ENCODE measurements at regions of chr1 and their contacts with region 1.

Region 1: DNA sequence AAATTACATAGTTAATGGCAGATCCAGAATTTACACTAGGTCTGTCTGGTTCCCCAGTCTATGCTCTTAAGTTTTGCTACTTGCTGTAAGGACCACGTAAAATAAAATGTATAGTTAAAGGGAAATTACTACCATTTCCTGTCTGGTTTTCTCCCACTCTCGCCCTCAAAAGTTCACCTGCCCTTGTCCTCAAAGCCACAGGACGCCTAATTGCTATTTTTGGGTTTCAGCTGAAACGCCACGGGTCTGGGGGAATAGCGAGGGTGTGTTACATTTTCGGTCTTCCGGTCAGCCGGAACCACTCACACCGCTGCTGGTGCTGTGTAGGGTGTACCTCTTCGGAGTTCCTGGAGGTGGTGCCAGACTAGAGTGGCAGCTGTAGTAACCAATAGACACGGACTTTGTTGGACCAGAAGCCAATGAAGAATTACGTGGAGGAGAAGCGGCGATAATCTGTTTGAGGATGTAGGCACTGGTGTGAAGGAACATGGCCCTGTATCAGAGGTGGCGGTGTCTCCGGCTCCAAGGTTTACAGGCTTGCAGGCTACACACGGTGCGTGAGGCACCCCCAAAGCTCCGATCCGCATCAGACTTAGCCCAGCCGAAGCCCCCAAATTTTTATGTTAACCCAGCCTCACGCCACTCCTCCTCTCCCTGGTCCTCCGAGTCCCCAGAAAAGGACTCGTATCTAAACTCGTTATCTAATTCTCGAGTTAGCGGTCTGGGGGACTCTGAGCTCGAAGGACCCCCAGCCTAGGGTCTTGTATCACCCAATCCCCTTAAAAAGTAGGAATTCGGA is at the start of gene TARS2:
- DNase-seq: peak; percentile 71 to 97 (median 95)
- ATAC-seq: peak; percentile 100
- H3K4me3 ChIP-seq: peak within 1 kb of the TSS; percentile 95
- H3K4me3 Mint-ChIP-seq: peak within 1 kb of the TSS; percentile 91 to 100 (median 96)
- H3K27ac ChIP-seq: peak within 1 kb of the TSS; percentile 83
- H3K27ac Mint-ChIP-seq: peak within 1 kb of the TSS; percentile 92 to 100 (median 99)
- H3K4me1 ChIP-seq: peaks cover 4 to 8% of the 10 kb centered on the region in 2 donors
- H3K4me1 Mint-ChIP-seq: peaks cover 5 to 28% (median 20%) of the 10 kb centered on the region in 7 donors
- H3K27me3 ChIP-seq: no peaks in the 10 kb centered on the region
- H3K27me3 Mint-ChIP-seq: no peaks in the 10 kb centered on the region
- total RNA-seq, gene TARS2: 30.3 to 39.0 (median 36.4) TPM

Region 2: DNA sequence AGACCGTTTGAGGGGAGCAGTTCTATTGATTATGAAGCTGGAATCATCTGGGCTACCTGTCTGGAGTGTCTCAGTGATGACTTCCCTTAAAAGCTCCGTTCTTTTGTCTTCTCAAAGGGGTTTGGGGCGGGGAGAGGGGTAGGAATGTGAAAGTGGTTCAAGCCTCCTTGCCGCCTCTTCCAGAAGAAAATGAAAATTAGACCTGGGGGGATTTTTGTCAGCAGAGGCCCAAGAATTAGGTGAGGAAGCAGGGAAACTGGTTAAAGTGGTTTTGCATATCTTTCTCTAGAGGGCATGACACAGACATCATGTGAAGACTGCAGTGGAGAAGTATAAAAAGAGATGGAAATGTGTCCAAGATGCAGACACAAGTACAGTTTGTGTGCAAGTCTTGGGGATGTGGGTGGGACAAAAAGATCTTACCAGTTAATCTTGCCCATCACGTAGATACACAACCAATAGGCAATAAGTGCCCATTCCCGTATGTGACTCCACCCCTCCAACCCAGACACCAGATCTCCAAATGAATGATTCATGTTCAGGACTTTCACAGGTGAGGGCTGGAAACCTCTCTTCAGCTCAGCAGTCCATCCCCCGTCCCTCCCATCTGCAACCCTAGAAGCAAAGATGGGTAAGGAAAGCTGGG is 550.0 kb before region 1 on chr1:
- CTCF ChIA-PET with region 1: no interaction called
- POLR2A ChIA-PET with region 1: no interaction called
- intact Hi-C with region 1: no loop called
- DNase-seq: no peak
- ATAC-seq: no peak
- H3K4me3 ChIP-seq: no peak overlapping the region
- H3K4me3 Mint-ChIP-seq: peak overlapping the region in 1 of 10 donors; percentile 56
- H3K27ac ChIP-seq: no peak overlapping the region
- H3K27ac Mint-ChIP-seq: peak overlapping the region in 3 of 9 donors; percentile 23 to 75 (median 23)
- H3K4me1 ChIP-seq: no peaks in the 10 kb centered on the region
- H3K4me1 Mint-ChIP-seq: peaks cover 0 to 26% (median 7%) of the 10 kb centered on the region in 7 donors
- H3K27me3 ChIP-seq: no peaks in the 10 kb centered on the region
- H3K27me3 Mint-ChIP-seq: peaks cover 0 to 1% (median 0%) of the 10 kb centered on the region in 5 donors

Region 3: DNA sequence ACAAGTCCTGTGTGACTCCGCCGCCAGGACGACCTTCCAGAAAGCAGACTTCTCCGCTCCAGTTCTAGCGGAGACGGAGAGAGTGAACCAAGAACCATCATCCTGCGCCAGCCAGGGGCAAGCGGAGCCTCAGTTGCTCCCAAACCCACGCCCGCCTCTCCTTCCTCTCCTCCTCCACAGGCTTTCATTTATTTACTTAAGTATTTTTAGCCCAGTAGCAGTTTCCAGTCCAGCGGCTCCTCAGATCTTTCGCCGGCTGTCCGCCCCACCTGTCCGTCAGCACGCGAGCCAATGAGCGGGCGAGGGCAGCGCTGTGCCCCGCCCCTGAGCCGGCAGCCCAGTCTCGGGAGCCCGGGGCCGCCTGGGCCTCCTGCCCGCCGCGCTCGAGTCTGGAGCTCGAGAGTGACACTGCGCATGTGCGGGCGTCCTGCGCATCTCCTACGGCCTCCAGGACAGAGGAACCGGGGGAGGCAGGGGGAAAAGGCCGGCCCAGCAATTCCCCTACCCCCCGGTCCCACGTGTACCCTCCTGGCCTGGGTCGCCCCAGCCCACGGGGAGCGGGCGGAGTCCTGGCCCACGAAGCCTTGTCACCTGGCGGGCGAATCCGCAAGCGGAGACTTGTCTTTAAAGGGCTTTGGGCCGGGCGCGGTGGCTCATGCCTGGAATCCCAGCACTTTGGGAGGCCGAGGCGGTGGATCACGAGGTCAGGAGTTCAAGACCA is 28.3 kb after region 1 on chr1 and contains the start of gene FALEC:
- CTCF ChIA-PET with region 1: interaction called, 3 read pairs
- POLR2A ChIA-PET with region 1: interaction called, 16 read pairs
- intact Hi-C with region 1: loop called (anchors 1 kb)
- DNase-seq: peak; percentile 81 to 94 (median 86)
- ATAC-seq: peak; percentile 99
- H3K4me3 ChIP-seq: peak within 1 kb of the TSS; percentile 58
- H3K4me3 Mint-ChIP-seq: peak within 1 kb of the TSS; percentile 83 to 94 (median 90)
- H3K27ac ChIP-seq: peak within 1 kb of the TSS; percentile 64
- H3K27ac Mint-ChIP-seq: peak within 1 kb of the TSS; percentile 40 to 87 (median 76)
- H3K4me1 ChIP-seq: peaks cover 0 to 6% of the 10 kb centered on the region in 2 donors
- H3K4me1 Mint-ChIP-seq: peaks cover 9 to 17% (median 10%) of the 10 kb centered on the region in 7 donors
- H3K27me3 ChIP-seq: no peaks in the 10 kb centered on the region
- H3K27me3 Mint-ChIP-seq: no peaks in the 10 kb centered on the region
- total RNA-seq, gene FALEC: 0.44 to 2.5 TPM in 2 of 5 experiments, not detected in the others

Region 4: GRCh38 chr1:150532868-150533302 is 45.7 kb after region 1 on chr1:
- CTCF ChIA-PET with region 1: interaction called, 4 read pairs
- POLR2A ChIA-PET with region 1: interaction called, 3 read pairs
- intact Hi-C with region 1: loop called in 1 of 2 experiments (anchors 1 kb)
- DNase-seq: no peak
- ATAC-seq: no peak
- H3K4me3 ChIP-seq: no peak overlapping the region
- H3K4me3 Mint-ChIP-seq: no peak overlapping the region
- H3K27ac ChIP-seq: no peak overlapping the region
- H3K27ac Mint-ChIP-seq: no peak overlapping the region
- H3K4me1 ChIP-seq: no peaks in the 10 kb centered on the region
- H3K4me1 Mint-ChIP-seq: peaks cover 0 to 6% (median 4%) of the 10 kb centered on the region in 7 donors
- H3K27me3 ChIP-seq: no peaks in the 10 kb centered on the region
- H3K27me3 Mint-ChIP-seq: peaks cover 0 to 5% (median 0%) of the 10 kb centered on the region in 5 donors

Region 5: GRCh38 chr1:151346769-151347522 is 859.8 kb after region 1 on chr1 and contains the start of gene RFX5:
- CTCF ChIA-PET with region 1: no interaction called
- POLR2A ChIA-PET with region 1: no interaction called
- intact Hi-C with region 1: loop called in 1 of 2 experiments (anchors 2 kb)
- DNase-seq: peak; percentile 73 to 98 (median 94)
- ATAC-seq: peak; percentile 95
- H3K4me3 ChIP-seq: peak within 1 kb of the TSS; percentile 75
- H3K4me3 Mint-ChIP-seq: peak within 1 kb of the TSS; percentile 85 to 98 (median 95)
- H3K27ac ChIP-seq: peak within 1 kb of the TSS; percentile 96
- H3K27ac Mint-ChIP-seq: peak within 1 kb of the TSS; percentile 95 to 100 (median 99)
- H3K4me1 ChIP-seq: peaks cover 13 to 16% of the 10 kb centered on the region in 2 donors
- H3K4me1 Mint-ChIP-seq: peaks cover 20 to 44% (median 39%) of the 10 kb centered on the region in 7 donors
- H3K27me3 ChIP-seq: no peaks in the 10 kb centered on the region
- H3K27me3 Mint-ChIP-seq: no peaks in the 10 kb centered on the region
- total RNA-seq, gene RFX5: 62.6 to 89.3 (median 82.2) TPM